ENCODE measurements at regions of chr5 and their contacts with region 1.

Region 1: DNA sequence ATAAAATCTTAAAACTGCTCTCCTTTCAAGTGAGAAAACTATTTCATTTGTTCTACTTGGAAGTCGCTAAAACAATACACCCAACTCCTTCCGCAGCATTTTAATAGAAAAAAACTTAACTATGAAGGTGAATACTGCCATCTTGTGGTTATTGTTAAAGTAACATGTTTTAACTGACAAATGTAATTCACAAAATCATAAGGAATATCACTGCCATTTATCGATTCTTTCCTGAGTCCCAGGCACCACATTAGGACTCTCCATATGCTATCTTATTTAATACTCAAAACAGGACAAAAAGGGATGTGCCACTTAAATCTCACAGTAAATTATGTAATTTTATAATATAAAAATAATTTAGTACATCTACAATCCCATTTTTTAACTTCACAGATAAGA is 130.5 kb upstream of the ITGA1 start:
- DNase-seq: peak in 1 of 2 experiments; percentile 17
- H3K4me3 ChIP-seq: no peak overlapping the region
- H3K4me3 Mint-ChIP-seq: no peak overlapping the region
- H3K27ac Mint-ChIP-seq: no peak overlapping the region
- H3K4me1 ChIP-seq: no peaks in the 10 kb centered on the region
- H3K4me1 Mint-ChIP-seq: no peaks in the 10 kb centered on the region
- H3K27me3 ChIP-seq: no peaks in the 10 kb centered on the region
- H3K27me3 Mint-ChIP-seq: no peaks in the 10 kb centered on the region
- CTCF ChIP-seq: peak; percentile 23 to 47

Region 2: GRCh38 chr5:52380385-52380784 is 276.9 kb before region 1 on chr5:
- CTCF ChIA-PET with region 1: no interaction called
- POLR2A ChIA-PET with region 1: no interaction called
- intact Hi-C with region 1: loop called (anchors 10 kb)
- DNase-seq: no peak
- H3K4me3 ChIP-seq: no peak overlapping the region
- H3K4me3 Mint-ChIP-seq: no peak overlapping the region
- H3K27ac Mint-ChIP-seq: no peak overlapping the region
- H3K4me1 ChIP-seq: no peaks in the 10 kb centered on the region
- H3K4me1 Mint-ChIP-seq: no peaks in the 10 kb centered on the region
- H3K27me3 ChIP-seq: no peaks in the 10 kb centered on the region; the same call in 1 of the 2 replicates
- H3K27me3 Mint-ChIP-seq: no peaks in the 10 kb centered on the region
- CTCF ChIP-seq: no peak

Region 3: DNA sequence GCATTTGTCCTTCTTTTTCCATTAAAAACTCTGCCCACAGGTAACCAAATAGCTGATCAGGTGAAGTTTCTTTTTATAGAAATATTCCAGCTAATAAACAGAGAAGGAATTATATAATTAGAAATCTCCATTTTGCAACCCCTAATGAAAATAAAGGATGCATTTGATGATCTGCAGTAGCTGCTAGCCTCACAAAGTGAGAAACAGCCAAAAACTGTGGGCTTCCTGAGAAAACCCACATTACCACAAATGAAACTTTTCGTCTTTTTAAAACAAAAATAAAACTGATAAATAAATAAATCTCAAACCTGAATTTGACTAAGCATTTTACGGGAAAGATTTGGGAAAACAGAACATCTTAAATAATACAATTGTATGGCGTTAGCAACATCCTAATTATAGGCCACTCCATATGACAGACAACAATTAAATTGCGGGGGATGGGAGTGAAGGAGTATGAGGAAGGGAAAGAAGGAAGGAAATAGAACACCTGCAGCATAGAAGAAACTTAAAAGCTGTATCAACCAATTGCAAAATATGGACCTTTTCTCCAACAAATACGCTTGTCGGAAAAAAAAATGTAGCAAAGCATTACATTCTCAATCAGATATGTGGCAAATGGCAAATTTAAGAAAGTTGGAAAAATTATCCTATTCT is 152.5 kb before region 1 on chr5:
- CTCF ChIA-PET with region 1: no interaction called
- POLR2A ChIA-PET with region 1: no interaction called
- intact Hi-C with region 1: loop called (anchors 5 kb)
- DNase-seq: no peak
- H3K4me3 ChIP-seq: no peak overlapping the region
- H3K4me3 Mint-ChIP-seq: no peak overlapping the region
- H3K27ac Mint-ChIP-seq: no peak overlapping the region
- H3K4me1 ChIP-seq: no peaks in the 10 kb centered on the region
- H3K4me1 Mint-ChIP-seq: no peaks in the 10 kb centered on the region
- H3K27me3 ChIP-seq: no peaks in the 10 kb centered on the region
- H3K27me3 Mint-ChIP-seq: peaks cover 3% of the 10 kb centered on the region
- CTCF ChIP-seq: no peak